CD4-positive, alpha-beta memory T cell (primary cell): ENCODE measurements at regions of chr21 and their contacts with region 1.

Region 1: GRCh38 chr21:15826147-15826780 is 96.5 kb downstream of the USP25 start:
- DNase-seq: peak; percentile 26 to 46 (median 30)
- H3K4me3 ChIP-seq: no peak overlapping the region
- H3K4me3 Mint-ChIP-seq: no peak overlapping the region
- H3K27ac ChIP-seq: no peak overlapping the region
- H3K27ac Mint-ChIP-seq: peak overlapping the region in 2 of 7 donors; percentile 4 to 18
- H3K4me1 ChIP-seq: peaks cover 32% of the 10 kb centered on the region
- H3K4me1 Mint-ChIP-seq: peaks cover 25 to 36% (median 33%) of the 10 kb centered on the region in 4 donors
- H3K27me3 ChIP-seq: no peaks in the 10 kb centered on the region
- H3K27me3 Mint-ChIP-seq: no peaks in the 10 kb centered on the region

Region 2: GRCh38 chr21:14259747-14260146 is 1566.5 kb before region 1 on chr21:
- CTCF ChIA-PET with region 1: interaction called, 4 read pairs
- POLR2A ChIA-PET with region 1: no interaction called
- intact Hi-C with region 1: loop called (anchors 10 kb)
- DNase-seq: peak in 3 of 5 donors; percentile 6 to 24 (median 11)
- H3K4me3 ChIP-seq: no peak overlapping the region
- H3K4me3 Mint-ChIP-seq: no peak overlapping the region
- H3K27ac ChIP-seq: no peak overlapping the region
- H3K27ac Mint-ChIP-seq: no peak overlapping the region
- H3K4me1 ChIP-seq: no peaks in the 10 kb centered on the region
- H3K4me1 Mint-ChIP-seq: no peaks in the 10 kb centered on the region
- H3K27me3 ChIP-seq: no peaks in the 10 kb centered on the region
- H3K27me3 Mint-ChIP-seq: peaks cover 3 to 10% of the 10 kb centered on the region in 2 donors

Region 3: GRCh38 chr21:14382835-14383594 is 1443.2 kb before region 1 on chr21 and contains the start of gene HSPA13:
- CTCF ChIA-PET with region 1: no interaction called
- POLR2A ChIA-PET with region 1: no interaction called
- intact Hi-C with region 1: loop called (anchors 10 kb)
- DNase-seq: peak; percentile 98 to 100 (median 99)
- H3K4me3 ChIP-seq: peak within 1 kb of the TSS; percentile 77 to 80
- H3K4me3 Mint-ChIP-seq: peak within 1 kb of the TSS; percentile 98 to 100 (median 100)
- H3K27ac ChIP-seq: peak within 1 kb of the TSS; percentile 84
- H3K27ac Mint-ChIP-seq: peak within 1 kb of the TSS; percentile 99 to 100 (median 100)
- H3K4me1 ChIP-seq: peaks cover 35% of the 10 kb centered on the region
- H3K4me1 Mint-ChIP-seq: peaks cover 16 to 51% (median 32%) of the 10 kb centered on the region in 4 donors
- H3K27me3 ChIP-seq: no peaks in the 10 kb centered on the region
- H3K27me3 Mint-ChIP-seq: no peaks in the 10 kb centered on the region
- total RNA-seq, gene HSPA13: 32.0 to 38.5 TPM

Region 4: DNA sequence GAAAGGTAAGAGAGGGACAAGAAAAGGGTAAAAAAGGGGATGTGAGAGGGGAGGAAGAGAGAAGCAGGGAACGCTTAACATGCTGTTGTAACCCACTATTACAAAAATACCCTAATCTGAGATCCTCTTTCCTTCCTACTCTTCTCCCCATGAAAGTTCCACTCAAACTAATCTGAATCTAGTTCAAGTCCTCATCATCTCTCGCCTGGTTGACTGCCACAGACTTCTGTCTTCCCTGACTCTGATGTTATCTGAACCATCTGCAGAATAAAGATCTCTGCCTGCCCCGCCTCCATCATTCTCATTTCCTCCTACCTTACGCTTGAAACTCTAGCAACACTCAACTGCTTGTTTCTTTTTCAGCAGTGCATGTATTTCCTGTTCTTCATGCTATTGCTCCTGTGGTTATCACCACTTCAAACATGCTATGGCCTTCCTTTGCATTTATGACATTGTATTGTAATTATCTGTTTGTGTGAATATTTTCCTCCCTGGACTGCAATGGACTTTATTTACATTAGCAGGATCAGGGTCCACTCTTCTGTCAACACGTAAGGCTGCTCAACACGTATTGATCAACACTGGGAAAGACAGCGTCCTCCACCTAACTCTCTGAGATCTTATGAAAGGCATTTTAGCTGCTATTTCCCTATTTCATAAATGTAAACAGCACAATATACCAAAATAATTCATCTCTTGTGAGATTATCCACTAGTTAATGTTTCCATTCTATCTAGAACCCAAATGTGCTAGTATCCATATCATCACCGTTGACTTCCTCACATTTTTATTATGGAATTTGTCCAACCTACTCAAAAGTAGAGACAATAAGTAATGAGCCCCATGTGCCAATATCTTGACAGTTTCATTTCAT is 312.0 kb before region 1 on chr21:
- CTCF ChIA-PET with region 1: no interaction called
- POLR2A ChIA-PET with region 1: no interaction called
- intact Hi-C with region 1: loop called (anchors 10 kb)
- DNase-seq: peak; percentile 74 to 84 (median 77)
- H3K4me3 ChIP-seq: peak overlapping the region in 1 of 2 donors; percentile 39
- H3K4me3 Mint-ChIP-seq: peak overlapping the region; percentile 31 to 86 (median 66)
- H3K27ac ChIP-seq: peak overlapping the region; percentile 30
- H3K27ac Mint-ChIP-seq: peak overlapping the region; percentile 19 to 94 (median 87)
- H3K4me1 ChIP-seq: peaks cover 33% of the 10 kb centered on the region
- H3K4me1 Mint-ChIP-seq: peaks cover 17 to 26% (median 23%) of the 10 kb centered on the region in 4 donors
- H3K27me3 ChIP-seq: no peaks in the 10 kb centered on the region
- H3K27me3 Mint-ChIP-seq: no peaks in the 10 kb centered on the region

Region 5: DNA sequence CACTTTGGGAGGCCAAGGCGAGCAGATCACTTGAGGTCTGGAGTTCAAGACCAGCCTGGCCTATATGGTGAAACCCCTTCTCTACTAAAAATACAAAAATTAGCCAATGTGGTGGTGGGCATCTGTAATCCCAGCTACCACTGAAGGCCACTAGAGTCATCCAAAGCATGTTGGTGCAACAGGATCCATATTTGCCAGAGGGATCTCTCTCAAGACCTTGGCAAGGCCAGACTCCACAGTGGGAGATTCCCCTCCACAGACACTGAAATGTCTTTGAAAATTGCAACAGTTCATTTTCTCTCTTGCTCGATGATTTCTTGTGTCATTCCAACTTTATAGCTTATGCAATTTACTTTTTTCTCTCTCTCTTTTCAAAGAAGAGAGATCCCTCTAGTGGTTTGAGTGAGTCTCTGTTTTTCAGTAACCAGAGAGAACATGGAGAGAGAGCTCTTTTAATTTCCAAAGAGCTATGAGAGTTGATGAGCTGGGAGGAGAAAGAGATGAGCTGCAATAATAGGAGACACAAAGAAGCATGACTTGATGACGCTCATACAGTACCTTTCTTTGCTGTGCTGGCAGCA is 273.3 kb before region 1 on chr21:
- CTCF ChIA-PET with region 1: interaction called, 3 read pairs
- POLR2A ChIA-PET with region 1: no interaction called
- intact Hi-C with region 1: loop called (anchors 1 kb)
- DNase-seq: peak in 4 of 5 donors; percentile 21 to 38 (median 34)
- H3K4me3 ChIP-seq: no peak overlapping the region
- H3K4me3 Mint-ChIP-seq: peak overlapping the region in 1 of 8 donors; percentile 21
- H3K27ac ChIP-seq: no peak overlapping the region
- H3K27ac Mint-ChIP-seq: no peak overlapping the region
- H3K4me1 ChIP-seq: peaks cover 11% of the 10 kb centered on the region
- H3K4me1 Mint-ChIP-seq: peaks cover 9 to 10% (median 10%) of the 10 kb centered on the region in 4 donors
- H3K27me3 ChIP-seq: no peaks in the 10 kb centered on the region
- H3K27me3 Mint-ChIP-seq: peaks cover 0 to 4% of the 10 kb centered on the region in 2 donors

Region 6: GRCh38 chr21:15592271-15592860 is 233.9 kb before region 1 on chr21:
- CTCF ChIA-PET with region 1: no interaction called
- POLR2A ChIA-PET with region 1: no interaction called
- intact Hi-C with region 1: loop called (anchors 5 kb)
- DNase-seq: peak in 4 of 5 donors; percentile 25 to 37 (median 32)
- H3K4me3 ChIP-seq: no peak overlapping the region
- H3K4me3 Mint-ChIP-seq: no peak overlapping the region
- H3K27ac ChIP-seq: no peak overlapping the region
- H3K27ac Mint-ChIP-seq: no peak overlapping the region
- H3K4me1 ChIP-seq: no peaks in the 10 kb centered on the region
- H3K4me1 Mint-ChIP-seq: no peaks in the 10 kb centered on the region
- H3K27me3 ChIP-seq: no peaks in the 10 kb centered on the region
- H3K27me3 Mint-ChIP-seq: peaks cover 6% of the 10 kb centered on the region in 2 donors

Region 7: DNA sequence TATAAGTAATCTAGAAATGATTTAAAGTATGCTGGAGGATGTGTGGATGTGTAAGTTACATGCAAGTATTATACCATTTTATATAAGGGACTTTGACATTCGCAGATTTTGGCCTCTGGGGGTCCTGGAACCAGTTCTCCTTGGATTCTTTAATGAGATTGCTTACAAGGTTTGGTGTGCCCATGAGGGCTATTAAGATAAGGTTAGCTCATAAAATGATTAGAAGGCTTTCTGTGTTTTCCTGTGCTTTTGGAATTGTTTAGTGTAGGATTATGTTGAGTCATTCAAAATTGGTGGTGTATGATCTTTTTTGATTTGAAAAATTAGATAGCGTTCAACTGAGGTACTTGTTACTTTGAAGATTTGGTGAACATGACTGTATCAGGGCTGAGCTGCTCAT is 90.9 kb before region 1 on chr21:
- CTCF ChIA-PET with region 1: interaction called, 5 read pairs
- POLR2A ChIA-PET with region 1: interaction called, 7 read pairs
- intact Hi-C with region 1: loop called (anchors 1 kb)
- DNase-seq: no peak
- H3K4me3 ChIP-seq: no peak overlapping the region
- H3K4me3 Mint-ChIP-seq: peak overlapping the region in 7 of 8 donors; percentile 47 to 79 (median 68)
- H3K27ac ChIP-seq: no peak overlapping the region
- H3K27ac Mint-ChIP-seq: peak overlapping the region; percentile 52 to 92 (median 83)
- H3K4me1 ChIP-seq: peaks cover 89% of the 10 kb centered on the region
- H3K4me1 Mint-ChIP-seq: peaks cover 57 to 93% (median 74%) of the 10 kb centered on the region in 4 donors
- H3K27me3 ChIP-seq: no peaks in the 10 kb centered on the region
- H3K27me3 Mint-ChIP-seq: no peaks in the 10 kb centered on the region

Region 8: GRCh38 chr21:15870819-15871218 is 44.6 kb after region 1 on chr21:
- CTCF ChIA-PET with region 1: no interaction called
- POLR2A ChIA-PET with region 1: no interaction called
- intact Hi-C with region 1: no loop called
- DNase-seq: no peak
- H3K4me3 ChIP-seq: no peak overlapping the region
- H3K4me3 Mint-ChIP-seq: no peak overlapping the region
- H3K27ac ChIP-seq: no peak overlapping the region
- H3K27ac Mint-ChIP-seq: no peak overlapping the region
- H3K4me1 ChIP-seq: no peaks in the 10 kb centered on the region
- H3K4me1 Mint-ChIP-seq: peaks cover 0 to 2% (median 0%) of the 10 kb centered on the region in 4 donors
- H3K27me3 ChIP-seq: no peaks in the 10 kb centered on the region
- H3K27me3 Mint-ChIP-seq: no peaks in the 10 kb centered on the region